Heart left ventricle (tissue), 16 donors: ENCODE measurements at regions of chr7 and their contacts with region 1.

Region 1: GRCh38 chr7:2209146-2209960 is 23.4 kb downstream of the MAD1L1 start:
- DNase-seq: peak; percentile 72 to 82 (median 77)
- ATAC-seq: peak; percentile 53 to 72 (median 63)
- H3K4me3 ChIP-seq: no peak overlapping the region
- H3K27ac ChIP-seq: no peak overlapping the region
- H3K4me1 ChIP-seq: peaks cover 0 to 10% (median 2%) of the 10 kb centered on the region in 12 donors
- H3K27me3 ChIP-seq: no peaks in the 10 kb centered on the region
- CTCF ChIP-seq: peak; percentile 61 to 87 (median 79)
- POLR2A ChIP-seq: no peak

Region 2: DNA sequence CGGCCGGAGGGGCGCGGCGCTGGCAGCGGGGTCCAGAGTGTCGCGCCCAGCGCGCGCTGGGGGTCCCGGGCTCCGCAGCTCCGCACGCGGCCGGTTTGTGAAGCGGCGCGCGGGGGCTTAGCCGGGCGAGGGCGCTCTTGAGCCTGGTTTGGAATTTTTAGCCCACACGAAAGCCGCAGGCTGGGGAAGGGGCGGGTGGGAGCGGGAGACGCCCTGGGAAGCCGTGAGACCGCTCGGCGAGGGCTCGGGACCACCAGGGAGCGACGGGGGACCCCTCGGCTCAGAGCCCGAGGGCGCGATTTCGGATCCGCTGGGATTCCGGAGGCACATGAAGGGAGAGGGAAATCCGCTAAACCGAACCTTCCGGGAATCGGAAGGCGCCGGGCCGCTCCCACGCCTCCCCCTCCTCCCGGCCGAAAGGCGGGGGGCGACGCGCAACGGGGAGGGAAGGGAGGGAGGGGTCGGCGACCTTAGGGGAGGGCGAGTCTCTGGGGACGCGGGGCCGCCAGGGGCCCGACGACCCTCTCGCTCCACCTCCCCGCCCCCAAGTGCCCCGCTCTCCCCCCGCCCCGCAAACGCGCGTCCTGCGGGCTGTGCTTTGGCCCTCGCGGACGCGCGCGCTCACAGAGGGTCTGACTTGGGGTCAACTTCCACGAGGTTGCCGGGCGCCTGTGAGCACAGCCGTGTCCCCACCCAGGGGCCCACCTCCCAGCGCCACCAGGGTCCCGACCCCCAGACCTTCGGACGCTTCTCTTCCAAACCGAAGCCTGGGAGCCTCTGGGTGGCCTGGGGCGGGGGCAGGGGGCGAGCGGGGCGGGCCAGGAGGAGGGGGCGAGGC is 544.4 kb before region 1 on chr7:
- intact Hi-C with region 1: loop called in 9 of 10 experiments (anchors 1 to 10 kb)
- DNase-seq: peak; percentile 55 to 81 (median 64)
- ATAC-seq: peak in 3 of 4 donors; percentile 18 to 56 (median 41)
- H3K4me3 ChIP-seq: peak overlapping the region; percentile 49 to 86 (median 69)
- H3K27ac ChIP-seq: peak overlapping the region; percentile 63 to 85 (median 75)
- H3K4me1 ChIP-seq: peaks cover 0 to 61% (median 41%) of the 10 kb centered on the region in 12 donors
- H3K27me3 ChIP-seq: peaks cover 6 to 74% (median 12%) of the 10 kb centered on the region in 9 donors
- CTCF ChIP-seq: peak; percentile 54 to 88 (median 77)
- POLR2A ChIP-seq: no peak

Region 3: DNA sequence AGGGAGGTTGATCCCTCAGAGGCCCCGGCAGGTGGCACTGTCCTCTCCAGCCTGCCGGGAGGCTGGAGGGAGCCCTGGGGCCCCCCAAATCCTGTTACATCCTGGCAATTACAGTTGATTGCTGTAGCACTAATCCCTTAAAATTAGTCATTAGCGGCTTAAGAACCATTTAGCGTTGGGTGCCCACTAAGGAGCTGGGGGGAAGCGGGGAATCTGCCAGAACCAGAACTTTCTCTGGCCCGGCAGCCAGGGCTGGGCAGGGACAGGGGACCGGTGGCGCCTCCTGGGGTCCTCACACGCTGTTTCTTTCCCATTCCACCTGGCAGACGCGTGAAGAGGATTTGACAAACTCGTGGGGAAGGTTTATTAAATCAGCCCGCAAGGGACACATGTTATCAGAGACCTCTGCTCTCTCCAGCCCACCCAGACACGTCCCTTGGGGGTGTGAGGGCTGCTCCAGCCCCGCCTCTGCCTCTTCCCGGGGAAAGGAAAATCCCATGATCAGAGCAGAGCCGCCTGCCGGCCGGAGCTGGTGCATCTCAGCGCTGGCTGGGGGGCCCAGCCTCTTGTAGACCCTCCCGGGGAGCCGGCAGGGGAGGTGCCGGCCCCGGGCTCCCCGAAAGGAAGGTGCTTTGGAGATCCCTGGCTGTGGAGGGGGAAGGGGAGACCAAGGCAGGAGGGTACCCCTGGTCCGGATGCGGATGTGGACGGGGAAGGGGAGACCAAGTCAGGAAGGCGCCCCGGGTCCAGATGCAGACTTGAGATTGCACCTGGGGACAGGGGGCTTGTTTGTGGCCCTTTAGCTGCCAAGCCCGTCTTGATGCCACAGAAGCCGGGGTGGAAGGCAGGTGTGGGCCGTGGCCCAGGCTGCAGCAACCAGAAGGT is 396.6 kb before region 1 on chr7:
- intact Hi-C with region 1: loop called in 3 of 10 experiments (anchors 5 kb)
- DNase-seq: no peak
- ATAC-seq: peak in 1 of 4 donors; percentile 53
- H3K4me3 ChIP-seq: no peak overlapping the region
- H3K27ac ChIP-seq: no peak overlapping the region
- H3K4me1 ChIP-seq: peaks cover 0 to 17% (median 5%) of the 10 kb centered on the region in 12 donors
- H3K27me3 ChIP-seq: no peaks in the 10 kb centered on the region
- CTCF ChIP-seq: peak in 10 of 12 donors; percentile 9 to 62 (median 42)
- POLR2A ChIP-seq: no peak

Region 4: GRCh38 chr7:2104107-2104710 is 105.1 kb before region 1 on chr7:
- intact Hi-C with region 1: loop called in 9 of 10 experiments (anchors 1 to 5 kb)
- DNase-seq: peak; percentile 88 to 92 (median 89)
- ATAC-seq: peak; percentile 67 to 89 (median 82)
- H3K4me3 ChIP-seq: peak overlapping the region in 8 of 12 donors; percentile 2 to 31 (median 20)
- H3K27ac ChIP-seq: peak overlapping the region in 8 of 12 donors; percentile 4 to 69 (median 38)
- H3K4me1 ChIP-seq: peaks cover 0 to 49% (median 28%) of the 10 kb centered on the region in 12 donors
- H3K27me3 ChIP-seq: no peaks in the 10 kb centered on the region
- CTCF ChIP-seq: peak; percentile 55 to 86 (median 71)
- POLR2A ChIP-seq: no peak

Region 5: DNA sequence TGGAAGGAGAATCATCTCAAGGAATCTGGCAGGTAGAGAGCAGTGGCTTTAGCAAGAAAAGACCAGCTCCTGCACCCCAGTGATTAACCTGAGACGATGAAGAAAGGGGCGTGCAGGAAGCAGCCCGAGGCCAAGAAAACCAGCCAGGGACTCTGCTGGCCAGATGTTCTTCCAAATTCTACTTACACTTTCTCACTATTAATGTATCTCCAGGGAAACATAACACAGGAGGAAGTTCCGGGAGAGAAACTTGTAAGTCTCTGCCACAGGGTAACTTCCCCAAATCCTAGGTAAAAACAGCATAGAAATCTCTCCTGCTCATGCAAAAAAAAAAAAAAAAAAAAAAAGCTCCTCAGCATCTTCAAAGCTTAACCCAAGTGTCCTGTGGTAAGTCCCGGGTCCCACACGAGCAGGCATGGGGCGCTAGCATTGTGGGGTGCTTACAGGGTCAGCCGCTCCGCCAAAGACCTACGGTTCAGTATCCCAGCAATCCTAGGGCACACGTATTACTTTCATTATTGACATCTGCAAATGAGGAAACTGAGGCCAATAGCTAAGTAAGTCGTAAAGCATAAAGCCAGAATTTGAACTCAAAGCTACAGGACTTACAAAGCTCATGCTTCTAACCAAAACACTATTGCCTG is 732.0 kb after region 1 on chr7:
- intact Hi-C with region 1: no loop called
- DNase-seq: no peak
- ATAC-seq: no peak
- H3K4me3 ChIP-seq: no peak overlapping the region
- H3K27ac ChIP-seq: no peak overlapping the region
- H3K4me1 ChIP-seq: peaks cover 0 to 12% (median 0%) of the 10 kb centered on the region in 12 donors
- H3K27me3 ChIP-seq: peaks cover 0 to 25% (median 4%) of the 10 kb centered on the region in 9 donors
- CTCF ChIP-seq: no peak
- POLR2A ChIP-seq: no peak